SK-N-SH (cell line): ENCODE measurements at regions of chr11 and their contacts with region 1.

Region 1: DNA sequence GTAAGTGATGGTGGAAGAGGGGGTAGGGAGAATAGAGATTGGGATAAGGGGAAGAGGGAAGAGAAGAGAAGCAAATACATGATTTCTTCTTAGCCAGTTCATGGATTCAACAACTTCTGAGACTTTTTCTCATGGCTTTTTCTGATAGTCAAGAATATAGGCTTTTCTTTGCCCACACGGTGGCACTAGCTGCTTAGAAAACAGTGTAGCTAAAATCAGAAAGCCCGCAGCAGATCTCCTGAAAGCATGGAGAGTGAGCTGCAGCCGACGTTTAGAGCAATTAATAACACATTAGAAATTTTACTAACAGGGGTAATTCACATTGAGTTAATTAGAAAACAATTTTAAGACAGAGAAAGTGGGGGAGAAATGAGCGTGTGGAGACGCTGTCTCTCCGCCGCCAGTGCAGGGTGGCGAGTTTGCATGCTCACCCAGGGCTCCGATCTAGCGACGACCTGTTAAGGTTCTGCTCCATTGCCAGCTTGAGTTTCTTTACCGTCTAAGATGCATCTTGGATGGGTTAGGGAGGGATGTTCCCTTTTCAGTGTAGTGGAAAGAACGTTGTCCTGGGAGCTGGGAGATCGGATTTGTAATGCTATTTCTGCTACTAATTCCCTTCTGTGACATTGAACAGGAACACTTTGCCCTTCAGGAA is 3.3 kb upstream of the RAG1 start:
- DNase-seq: peak; percentile 70
- H3K4me3 ChIP-seq: peak overlapping the region; percentile 48 to 67
- H3K27ac ChIP-seq: peak overlapping the region in 1 of 2 experiments; percentile 100; a peak in 2 of 4 replicates
- H3K4me1 ChIP-seq: peaks cover 0 to 27% of the 10 kb centered on the region in 2 experiments; a peak in 2 of 4 replicates
- H3K27me3 ChIP-seq: no peaks in the 10 kb centered on the region
- CTCF ChIP-seq: peak; percentile 91
- EP300 ChIP-seq: no peak
- RAD21 ChIP-seq: peak; percentile 93

Region 2: DNA sequence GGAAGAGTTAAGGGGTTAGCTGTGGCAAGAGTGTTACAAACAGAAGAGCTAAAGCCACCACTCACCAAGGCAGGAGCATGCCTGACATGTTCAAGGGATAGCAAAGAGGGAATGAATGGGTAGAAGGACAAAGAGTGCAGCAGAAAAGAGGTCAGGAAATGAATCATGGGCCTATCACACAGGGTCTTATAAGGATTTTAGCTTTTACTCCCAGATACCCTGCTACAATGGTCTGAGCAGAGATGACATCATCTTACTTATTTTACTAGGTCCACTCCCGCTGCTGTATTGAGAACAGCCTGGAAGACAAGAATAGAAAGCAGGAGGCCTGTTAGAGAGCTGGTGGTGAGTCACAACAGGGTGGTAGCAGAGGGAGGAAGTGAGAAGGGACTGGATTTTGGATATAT is 64.2 kb before region 1 on chr11:
- CTCF ChIA-PET with region 1: interaction called, 11 read pairs
- POLR2A ChIA-PET with region 1: no interaction called
- DNase-seq: no peak
- H3K4me3 ChIP-seq: no peak overlapping the region
- H3K27ac ChIP-seq: peak overlapping the region; percentile 55 to 80
- H3K4me1 ChIP-seq: peaks cover 4 to 20% of the 10 kb centered on the region in 2 experiments
- H3K27me3 ChIP-seq: no peaks in the 10 kb centered on the region
- CTCF ChIP-seq: no peak
- EP300 ChIP-seq: peak in 1 of 2 experiments; percentile 49; a peak in 1 of 4 replicates
- RAD21 ChIP-seq: no peak

Region 3: GRCh38 chr11:36583667-36584066 is 19.2 kb after region 1 on chr11:
- CTCF ChIA-PET with region 1: interaction called, 58 read pairs
- POLR2A ChIA-PET with region 1: interaction called, 5 read pairs
- DNase-seq: no peak
- H3K4me3 ChIP-seq: no peak overlapping the region
- H3K27ac ChIP-seq: no peak overlapping the region
- H3K4me1 ChIP-seq: peaks cover 6 to 8% of the 10 kb centered on the region in 2 experiments; a peak in 3 of 4 replicates
- H3K27me3 ChIP-seq: no peaks in the 10 kb centered on the region
- CTCF ChIP-seq: no peak
- EP300 ChIP-seq: no peak
- RAD21 ChIP-seq: no peak

Region 4: DNA sequence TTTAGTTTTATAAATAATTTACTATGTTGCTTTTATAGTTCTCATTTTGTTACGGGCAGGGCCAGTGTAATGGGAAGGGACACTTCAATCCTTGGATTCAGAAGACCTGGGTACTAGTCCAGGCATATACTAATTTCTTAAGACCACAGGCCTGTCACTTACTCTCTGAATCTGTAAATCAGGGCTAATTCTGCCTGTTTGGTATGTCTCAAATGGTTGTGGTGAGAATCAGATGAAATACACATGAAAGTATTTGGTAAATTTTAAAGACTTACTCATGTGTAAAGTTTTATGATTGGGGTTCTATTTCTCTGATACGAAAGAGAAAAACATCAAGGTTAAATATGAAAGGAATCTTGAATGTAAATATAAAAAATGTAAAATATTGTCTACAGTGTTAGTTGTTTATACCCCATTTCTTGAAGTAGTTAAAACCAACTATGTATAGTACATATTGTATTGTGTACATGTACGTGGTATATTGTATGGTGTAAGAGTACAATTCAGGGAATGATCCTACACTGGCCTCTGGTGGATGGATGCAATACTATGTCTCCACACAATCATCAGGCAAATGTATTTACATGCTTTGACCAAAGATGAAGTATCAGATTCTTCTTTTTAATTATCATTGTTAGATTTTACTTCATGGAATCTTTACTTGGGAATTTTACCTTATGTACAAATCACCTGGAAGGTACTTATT is 58.1 kb after region 1 on chr11:
- CTCF ChIA-PET with region 1: interaction called, 144 read pairs
- POLR2A ChIA-PET with region 1: interaction called, 43 read pairs
- DNase-seq: peak; percentile 32
- H3K4me3 ChIP-seq: no peak overlapping the region
- H3K27ac ChIP-seq: peak overlapping the region in 1 of 2 experiments; percentile 100; a peak in 2 of 4 replicates
- H3K4me1 ChIP-seq: peaks cover 16 to 52% of the 10 kb centered on the region in 2 experiments; a peak in 3 of 4 replicates
- H3K27me3 ChIP-seq: no peaks in the 10 kb centered on the region
- CTCF ChIP-seq: peak; percentile 83
- EP300 ChIP-seq: no peak
- RAD21 ChIP-seq: peak; percentile 98

Region 5: GRCh38 chr11:36672813-36673450 is 108.4 kb after region 1 on chr11:
- CTCF ChIA-PET with region 1: interaction called, 44 read pairs
- POLR2A ChIA-PET with region 1: no interaction called
- DNase-seq: peak; percentile 33
- H3K4me3 ChIP-seq: no peak overlapping the region
- H3K27ac ChIP-seq: no peak overlapping the region
- H3K4me1 ChIP-seq: no peaks in the 10 kb centered on the region
- H3K27me3 ChIP-seq: no peaks in the 10 kb centered on the region
- CTCF ChIP-seq: peak; percentile 84
- EP300 ChIP-seq: no peak
- RAD21 ChIP-seq: peak; percentile 62

Region 6: GRCh38 chr11:36738292-36738861 is 173.9 kb after region 1 on chr11:
- CTCF ChIA-PET with region 1: interaction called, 31 read pairs
- POLR2A ChIA-PET with region 1: no interaction called
- DNase-seq: no peak
- H3K4me3 ChIP-seq: no peak overlapping the region
- H3K27ac ChIP-seq: no peak overlapping the region
- H3K4me1 ChIP-seq: no peaks in the 10 kb centered on the region
- H3K27me3 ChIP-seq: no peaks in the 10 kb centered on the region
- CTCF ChIP-seq: no peak
- EP300 ChIP-seq: no peak
- RAD21 ChIP-seq: no peak